IMR-90 (cell line): ENCODE measurements at regions of chr14 and their contacts with region 1.

Region 1: DNA sequence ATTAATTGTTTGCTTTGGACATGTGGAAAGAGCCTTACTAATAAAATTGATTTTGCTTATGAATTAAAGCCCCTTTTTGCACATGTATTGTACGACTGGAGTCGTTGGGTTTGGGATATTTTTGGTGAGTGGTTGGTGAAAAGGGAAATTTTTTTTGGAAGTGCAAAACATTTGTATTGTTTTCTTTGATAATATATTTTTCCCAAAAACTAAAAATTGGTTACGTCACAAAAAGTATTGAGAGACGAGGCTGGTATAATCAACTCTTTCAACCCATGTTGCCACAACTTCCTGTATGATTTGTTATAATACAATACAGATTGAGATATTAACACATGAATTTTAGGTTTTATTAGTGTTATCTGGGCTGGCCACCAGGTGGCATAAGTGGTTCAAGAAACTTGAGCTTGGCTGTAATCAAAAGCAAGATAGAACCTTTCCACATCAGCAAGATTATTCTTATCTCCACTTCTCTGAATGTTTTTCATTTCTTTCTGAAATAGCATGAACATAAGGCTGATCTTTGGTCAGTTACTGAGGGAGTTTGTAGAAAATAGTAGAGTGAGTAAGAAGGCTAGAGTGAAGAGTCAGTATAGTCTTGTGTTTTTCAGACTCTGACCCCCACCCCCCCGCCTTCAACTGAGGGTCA is 8.7 kb downstream of the NGDN start:
- DNase-seq: peak; percentile 74
- ATAC-seq: peak; percentile 80
- H3K4me3 ChIP-seq: no peak overlapping the region
- H3K27ac ChIP-seq: no peak overlapping the region
- H3K4me1 ChIP-seq: no peaks in the 10 kb centered on the region
- H3K27me3 ChIP-seq: no peaks in the 10 kb centered on the region
- CTCF ChIP-seq: peak; percentile 84
- POLR2A ChIP-seq: no peak
- RAD21 ChIP-seq: peak; percentile 80

Region 2: GRCh38 chr14:23436327-23437132 is 41.7 kb before region 1 on chr14:
- CTCF ChIA-PET with region 1: no interaction called
- POLR2A ChIA-PET with region 1: no interaction called
- dilution Hi-C with region 1: no loop called
- in situ Hi-C with region 1: no loop called
- intact Hi-C with region 1: no loop called
- DNase-seq: no peak
- ATAC-seq: no peak
- H3K4me3 ChIP-seq: no peak overlapping the region
- H3K27ac ChIP-seq: no peak overlapping the region
- H3K4me1 ChIP-seq: no peaks in the 10 kb centered on the region
- H3K27me3 ChIP-seq: peaks cover 33% of the 10 kb centered on the region
- CTCF ChIP-seq: no peak
- POLR2A ChIP-seq: no peak
- RAD21 ChIP-seq: no peak

Region 3: DNA sequence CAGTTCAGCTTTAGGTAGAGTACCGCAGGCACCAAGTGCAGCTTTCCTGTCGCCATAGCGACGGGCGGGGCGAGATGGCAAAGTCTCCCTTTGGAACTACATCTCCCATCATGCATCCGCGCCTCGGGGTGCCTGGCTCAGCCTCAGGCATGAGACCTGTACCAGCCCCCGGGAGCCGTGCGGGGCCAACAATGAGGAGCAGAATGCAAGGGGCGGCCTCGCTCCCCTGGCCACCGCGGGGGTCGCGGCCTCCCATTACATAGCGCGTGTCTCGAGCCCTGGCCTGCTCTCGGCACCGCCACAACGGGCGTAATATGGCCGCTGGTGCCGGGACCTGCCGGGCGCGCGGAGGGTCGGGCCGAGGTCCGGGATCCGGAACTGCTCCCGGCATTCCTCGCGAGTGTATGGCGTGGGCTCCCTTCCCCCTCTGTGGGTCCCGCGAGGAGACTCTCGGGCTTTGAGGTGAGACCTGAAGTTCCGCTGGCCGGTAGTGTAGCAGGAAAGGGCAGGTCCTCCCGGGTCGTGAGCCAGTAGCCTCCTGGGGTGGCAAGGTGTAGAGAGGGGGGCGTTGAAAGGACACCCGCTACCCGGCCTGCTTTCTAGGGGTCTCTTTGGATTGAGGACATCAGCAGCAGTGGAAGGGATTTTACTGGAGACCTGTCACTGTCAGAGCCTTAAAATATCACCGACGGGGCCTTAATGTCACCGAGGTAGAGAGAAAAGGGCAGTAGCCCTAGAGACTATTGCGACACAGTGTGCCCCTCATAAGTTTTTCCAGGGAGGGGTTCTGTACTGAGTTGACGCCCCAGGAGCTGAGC is 77.9 kb after region 1 on chr14 and contains the start of gene THTPA:
- CTCF ChIA-PET with region 1: interaction called, 30 read pairs
- POLR2A ChIA-PET with region 1: interaction called, 4 read pairs
- dilution Hi-C with region 1: no loop called
- in situ Hi-C with region 1: loop called (anchors 5 kb)
- intact Hi-C with region 1: loop called (anchors 1 kb)
- DNase-seq: peak; percentile 83
- ATAC-seq: peak; percentile 91
- H3K4me3 ChIP-seq: peak within 1 kb of the TSS; percentile 77
- H3K27ac ChIP-seq: peak within 1 kb of the TSS; percentile 85
- H3K4me1 ChIP-seq: peaks cover 7% of the 10 kb centered on the region
- H3K27me3 ChIP-seq: no peaks in the 10 kb centered on the region
- CTCF ChIP-seq: no peak
- POLR2A ChIP-seq: peak; percentile 69; the same call in 1 of the 2 replicates
- RAD21 ChIP-seq: no peak
- total RNA-seq, gene THTPA: 5.0 and 5.8 TPM in 2 replicates

Region 4: DNA sequence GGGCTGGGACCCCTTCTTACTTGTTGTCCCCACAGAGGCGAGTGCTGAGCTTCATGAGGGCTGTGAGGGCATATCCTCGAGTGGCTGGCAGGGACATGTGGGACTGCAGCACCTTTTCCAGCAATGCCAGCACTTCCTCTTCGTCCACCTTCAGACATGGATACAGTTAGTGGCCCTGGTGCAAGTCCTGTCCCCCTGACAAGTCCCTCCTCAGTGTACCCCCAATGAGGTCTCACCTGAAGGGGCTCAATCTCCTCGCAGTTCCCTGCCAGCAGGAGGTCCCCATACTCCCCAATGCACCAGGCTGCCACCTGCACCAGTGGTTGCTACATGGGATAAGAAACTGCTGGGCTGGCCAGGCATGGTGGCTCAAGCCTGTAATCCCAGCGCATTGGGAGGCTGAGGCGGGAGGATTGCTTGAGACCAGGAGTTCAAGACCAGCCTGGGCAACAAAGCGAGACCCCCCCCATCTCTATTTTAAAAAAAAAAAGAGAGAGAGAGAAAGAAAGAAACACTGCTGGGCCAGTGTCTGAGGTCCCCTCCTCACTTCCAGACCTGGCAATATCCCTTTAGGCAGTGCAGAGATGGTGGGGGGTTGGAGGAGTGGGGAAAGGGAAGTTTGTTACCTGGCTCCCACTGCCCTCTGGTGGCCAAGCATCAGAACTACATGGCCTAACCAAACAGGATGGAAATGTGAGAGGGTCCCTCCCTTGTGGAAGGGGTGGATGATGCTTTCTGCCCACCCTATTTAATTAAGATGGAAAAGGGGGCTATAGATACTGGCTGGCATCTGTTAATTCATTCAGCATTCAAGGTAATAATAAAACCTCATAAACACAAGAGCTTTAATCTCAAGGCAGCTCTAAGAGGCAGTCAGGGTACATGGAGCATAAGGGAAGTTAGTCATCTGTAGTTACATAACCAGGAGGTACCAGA is 84.3 kb after region 1 on chr14:
- CTCF ChIA-PET with region 1: interaction called, 30 read pairs
- POLR2A ChIA-PET with region 1: interaction called, 3 read pairs
- dilution Hi-C with region 1: no loop called
- in situ Hi-C with region 1: loop called (anchors 5 kb)
- intact Hi-C with region 1: loop called (anchors 1 kb)
- DNase-seq: peak; percentile 40
- ATAC-seq: peak; percentile 63
- H3K4me3 ChIP-seq: no peak overlapping the region
- H3K27ac ChIP-seq: no peak overlapping the region
- H3K4me1 ChIP-seq: no peaks in the 10 kb centered on the region
- H3K27me3 ChIP-seq: no peaks in the 10 kb centered on the region
- CTCF ChIP-seq: peak; percentile 85
- POLR2A ChIP-seq: no peak
- RAD21 ChIP-seq: peak; percentile 82

Region 5: DNA sequence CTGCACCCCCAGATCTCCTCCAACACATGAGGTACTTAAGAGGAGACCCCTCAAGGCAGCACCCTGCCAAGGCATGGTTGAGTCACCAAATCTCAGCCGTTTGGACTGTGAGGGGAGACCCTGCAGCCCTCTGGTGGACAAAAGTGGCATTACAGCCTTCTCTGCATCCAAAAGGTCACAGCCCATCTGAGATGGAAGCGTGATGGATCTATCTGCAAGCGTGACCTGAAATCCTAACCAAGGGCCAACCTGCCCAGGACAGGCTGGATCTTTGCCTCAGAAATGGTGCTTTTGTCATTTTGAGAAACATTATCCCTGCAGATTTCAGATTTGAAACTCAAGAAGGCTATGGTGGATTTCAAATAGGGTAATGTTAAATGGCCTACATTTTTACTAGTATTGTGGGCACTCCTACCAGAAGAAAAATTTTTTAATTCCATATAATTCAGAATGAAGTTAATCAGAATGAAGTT is 451.6 kb after region 1 on chr14:
- CTCF ChIA-PET with region 1: interaction called, 7 read pairs
- POLR2A ChIA-PET with region 1: no interaction called
- dilution Hi-C with region 1: no loop called
- in situ Hi-C with region 1: no loop called
- intact Hi-C with region 1: loop called (anchors 10 kb)
- DNase-seq: peak; percentile 69
- ATAC-seq: peak; percentile 99
- H3K4me3 ChIP-seq: no peak overlapping the region
- H3K27ac ChIP-seq: no peak overlapping the region
- H3K4me1 ChIP-seq: no peaks in the 10 kb centered on the region
- H3K27me3 ChIP-seq: peaks cover 4% of the 10 kb centered on the region; the same call in 1 of the 2 replicates
- CTCF ChIP-seq: peak; percentile 78
- POLR2A ChIP-seq: no peak
- RAD21 ChIP-seq: peak; percentile 69